Sigmoid colon (tissue), 7 donors: ENCODE measurements at regions of chr12 and their contacts with region 1.

Region 1: GRCh38 chr12:26832822-26833742 is at the start of gene ITPR2:
- DNase-seq: peak; percentile 97
- H3K4me3 ChIP-seq: peak within 1 kb of the TSS; percentile 75 to 85 (median 79)
- H3K27ac ChIP-seq: peak within 1 kb of the TSS; percentile 92 to 96 (median 94)
- H3K4me1 ChIP-seq: peaks cover 0 to 46% (median 33%) of the 10 kb centered on the region in 4 donors
- H3K27me3 ChIP-seq: no peaks in the 10 kb centered on the region
- CTCF ChIP-seq: no peak
- EP300 ChIP-seq: no peak
- POLR2A ChIP-seq: peak; percentile 88 to 95
- total RNA-seq, gene ITPR2: 58.9 to 78.1 (median 64.0) TPM

Region 2: DNA sequence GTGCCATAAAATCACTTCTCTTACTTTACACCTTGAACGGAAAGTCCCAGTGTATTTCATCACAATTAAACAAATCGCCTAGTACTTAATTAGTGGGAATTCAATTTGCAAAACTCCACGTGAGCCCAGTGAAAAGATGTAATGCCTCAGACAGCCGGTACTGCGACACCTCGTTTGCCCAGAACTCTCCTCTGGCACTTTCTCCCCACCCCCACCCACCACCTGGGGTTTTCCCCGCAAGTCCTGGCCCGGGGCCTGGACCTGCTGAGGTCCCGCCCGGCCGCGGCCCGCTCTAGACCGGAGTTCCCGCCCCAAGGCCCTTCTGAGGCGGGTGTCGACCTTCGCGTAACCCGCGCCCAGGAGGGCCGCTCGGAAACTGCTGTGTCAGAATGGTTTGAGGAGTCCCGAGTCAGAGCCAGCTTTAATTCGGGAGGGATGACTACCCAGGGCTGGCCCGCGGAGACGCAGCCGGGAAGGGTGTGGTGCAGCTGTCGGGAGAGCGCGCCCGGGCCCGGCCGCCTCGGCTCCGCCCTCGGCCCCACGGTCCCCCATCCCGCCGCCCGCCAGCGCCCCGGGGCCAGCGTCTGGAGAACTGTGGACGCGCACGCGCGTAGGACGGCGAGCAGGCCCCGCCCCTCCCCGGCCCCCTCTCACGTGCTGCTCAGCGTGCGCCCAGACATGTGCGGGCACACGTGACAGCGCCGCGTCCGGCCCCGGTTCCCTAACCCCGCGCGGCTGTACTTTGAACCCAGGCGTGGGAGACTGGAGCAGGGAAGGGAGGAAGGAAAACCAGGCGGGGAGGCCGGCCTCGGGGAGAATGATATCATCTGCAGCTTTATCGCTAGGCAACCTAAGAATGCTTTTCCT is 719.0 kb before region 1 on chr12:
- intact Hi-C with region 1: loop called (anchors 5 kb)
- DNase-seq: peak; percentile 97
- H3K4me3 ChIP-seq: peak overlapping the region; percentile 34 to 57 (median 55)
- H3K27ac ChIP-seq: peak overlapping the region; percentile 91 to 95 (median 92)
- H3K4me1 ChIP-seq: peaks cover 0 to 21% (median 18%) of the 10 kb centered on the region in 4 donors
- H3K27me3 ChIP-seq: no peaks in the 10 kb centered on the region
- CTCF ChIP-seq: peak in 3 of 4 experiments; percentile 22 to 43 (median 37)
- EP300 ChIP-seq: peak in 3 of 4 donors; percentile 30 to 53 (median 39)
- POLR2A ChIP-seq: peak; percentile 61 to 63

Region 3: GRCh38 chr12:26629864-26630263 is 203.2 kb before region 1 on chr12:
- intact Hi-C with region 1: loop called (anchors 5 kb)
- DNase-seq: no peak
- H3K4me3 ChIP-seq: peak overlapping the region in 1 of 4 donors; percentile 31
- H3K27ac ChIP-seq: peak overlapping the region; percentile 69 to 83 (median 74)
- H3K4me1 ChIP-seq: peaks cover 0 to 52% (median 39%) of the 10 kb centered on the region in 4 donors
- H3K27me3 ChIP-seq: no peaks in the 10 kb centered on the region
- CTCF ChIP-seq: peak; percentile 32 to 61 (median 45)
- EP300 ChIP-seq: no peak
- POLR2A ChIP-seq: no peak

Region 4: DNA sequence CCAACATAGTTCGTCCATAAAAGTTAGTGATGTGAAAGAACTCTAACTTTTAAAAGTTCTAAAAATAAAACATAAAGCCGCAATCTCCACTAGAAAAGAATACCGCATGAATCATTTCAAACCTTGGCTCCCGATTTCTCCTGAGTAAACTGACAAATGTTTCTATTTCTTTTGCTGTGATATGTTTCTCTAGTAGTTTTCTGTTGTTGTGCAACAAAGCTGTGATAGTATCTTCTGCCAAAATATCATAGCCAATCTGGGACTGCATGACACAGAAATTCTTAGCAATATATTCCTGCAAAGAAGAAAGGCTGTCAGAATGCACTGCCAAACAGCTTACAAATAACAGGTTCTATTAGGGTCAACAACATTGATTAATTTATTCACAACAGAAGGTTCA is 174.1 kb before region 1 on chr12:
- intact Hi-C with region 1: loop called (anchors 5 kb)
- DNase-seq: no peak
- H3K4me3 ChIP-seq: no peak overlapping the region
- H3K27ac ChIP-seq: peak overlapping the region in 2 of 4 donors; percentile 11 to 43
- H3K4me1 ChIP-seq: peaks cover 0 to 16% (median 7%) of the 10 kb centered on the region in 4 donors
- H3K27me3 ChIP-seq: no peaks in the 10 kb centered on the region
- CTCF ChIP-seq: no peak
- EP300 ChIP-seq: no peak
- POLR2A ChIP-seq: no peak

Region 5: DNA sequence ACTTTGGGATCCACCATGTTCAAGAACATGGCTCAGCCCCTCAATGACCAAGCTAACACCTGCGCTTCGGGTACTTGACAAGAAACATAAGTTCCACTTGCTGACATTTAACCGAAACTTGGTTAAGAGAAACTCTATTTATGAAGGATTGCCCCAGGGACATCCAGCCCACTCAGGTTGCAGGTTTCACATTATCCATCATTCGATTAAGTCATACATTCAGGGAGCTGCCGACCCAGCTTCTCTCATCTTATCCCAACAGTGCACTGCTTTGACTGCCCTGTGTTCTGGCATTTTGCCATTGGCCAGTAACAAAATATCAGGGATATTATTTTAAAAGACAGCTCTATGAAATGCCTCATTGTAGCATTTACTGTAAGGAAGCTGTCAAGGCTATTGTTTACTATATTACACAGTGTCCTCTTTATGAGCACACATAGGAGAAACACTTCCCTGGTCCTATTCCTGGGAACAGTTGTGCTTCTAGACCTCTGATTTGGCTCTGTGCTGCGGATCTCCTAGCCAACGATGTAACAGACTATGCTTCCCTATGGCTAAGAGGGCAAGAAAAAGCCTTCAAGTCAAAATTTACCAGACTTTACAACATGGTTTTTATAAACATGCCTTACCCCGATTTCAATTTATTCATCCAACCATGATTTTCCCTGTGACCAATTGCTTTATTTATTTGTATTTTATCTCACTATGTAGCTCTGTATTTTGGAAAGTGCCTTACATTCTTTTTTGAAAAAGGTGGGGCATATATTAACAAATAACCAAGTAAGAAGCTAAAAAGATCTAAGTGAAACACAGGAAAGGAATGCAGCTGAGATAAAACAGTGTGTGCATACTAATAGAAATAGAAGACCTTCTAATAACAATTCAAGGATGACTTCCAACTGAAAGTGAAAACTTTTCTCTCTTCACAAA is 109.4 kb before region 1 on chr12:
- intact Hi-C with region 1: loop called (anchors 5 kb)
- DNase-seq: no peak
- H3K4me3 ChIP-seq: peak overlapping the region in 1 of 4 donors; percentile 16
- H3K27ac ChIP-seq: peak overlapping the region; percentile 41 to 77 (median 70)
- H3K4me1 ChIP-seq: peaks cover 0 to 56% (median 18%) of the 10 kb centered on the region in 4 donors
- H3K27me3 ChIP-seq: no peaks in the 10 kb centered on the region
- CTCF ChIP-seq: no peak
- EP300 ChIP-seq: peak in 1 of 4 donors; percentile 35
- POLR2A ChIP-seq: no peak

Region 6: GRCh38 chr12:26748741-26749431 is 84.2 kb before region 1 on chr12:
- intact Hi-C with region 1: loop called (anchors 5 kb)
- DNase-seq: no peak
- H3K4me3 ChIP-seq: no peak overlapping the region
- H3K27ac ChIP-seq: peak overlapping the region in 1 of 4 donors; percentile 3
- H3K4me1 ChIP-seq: peaks cover 0 to 63% (median 49%) of the 10 kb centered on the region in 4 donors
- H3K27me3 ChIP-seq: no peaks in the 10 kb centered on the region
- CTCF ChIP-seq: no peak
- EP300 ChIP-seq: no peak
- POLR2A ChIP-seq: no peak